Dorsolateral prefrontal cortex (tissue), 120 donors: ENCODE measurements at regions of chr14 and their contacts with region 1.

Region 1: DNA sequence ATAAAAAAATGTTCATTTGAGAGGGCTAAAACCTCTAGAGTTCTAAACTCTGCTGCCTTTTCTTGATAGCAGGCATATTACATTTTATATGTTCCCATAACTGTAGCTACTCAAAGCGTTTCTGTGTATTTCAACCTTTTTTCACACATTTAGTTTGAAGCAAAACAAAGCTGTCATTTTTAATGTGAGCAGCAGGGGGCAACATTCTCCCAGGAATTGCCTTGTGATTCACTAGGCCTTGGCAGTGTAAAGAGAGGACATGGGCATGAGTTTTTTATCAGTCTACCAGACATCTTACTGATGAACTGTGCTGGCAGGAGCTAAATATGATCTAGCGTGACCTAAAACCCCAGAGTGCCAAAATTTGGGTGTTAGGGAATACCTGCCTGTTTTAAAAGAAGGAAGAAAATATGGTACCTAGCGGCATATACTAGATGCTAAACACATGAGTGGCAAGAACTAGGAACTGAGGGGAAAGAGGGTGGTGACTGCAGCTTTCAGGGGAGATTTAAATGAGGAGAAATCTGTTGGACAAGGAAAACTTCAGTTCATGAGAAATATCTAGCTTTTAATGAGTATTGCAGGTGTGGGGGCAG is 65.3 kb downstream of the IFT43 start:
- DNase-seq: peak in 6 of 10 donors; percentile 46 to 82 (median 62)
- H3K4me3 ChIP-seq: no peak overlapping the region
- H3K27ac ChIP-seq: no peak overlapping the region
- H3K27me3 ChIP-seq: no peaks in the 10 kb centered on the region
- CTCF ChIP-seq: peak; percentile 74 to 98 (median 88)

Region 2: DNA sequence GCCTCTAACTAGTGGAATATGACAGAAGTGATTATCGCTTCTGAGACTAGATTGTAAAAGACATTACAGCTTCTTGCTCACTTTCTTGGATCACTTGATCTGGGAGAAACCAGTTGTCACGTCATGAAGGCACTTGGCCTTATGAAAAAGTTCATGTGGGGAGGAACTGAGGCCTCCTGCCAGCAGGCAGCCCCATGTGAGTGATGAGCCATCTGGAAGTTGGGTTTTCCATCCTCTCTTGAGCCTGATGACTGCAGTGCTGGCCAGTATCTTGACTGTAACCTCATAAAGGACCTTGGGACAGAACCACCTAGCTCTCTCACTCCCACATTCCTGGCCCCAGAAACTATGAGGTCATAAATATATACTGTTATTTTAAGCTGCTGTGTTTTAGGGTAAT is 361.9 kb before region 1 on chr14:
- intact Hi-C with region 1: no loop called
- DNase-seq: no peak
- H3K4me3 ChIP-seq: no peak overlapping the region
- H3K27ac ChIP-seq: no peak overlapping the region
- H3K27me3 ChIP-seq: no peaks in the 10 kb centered on the region
- CTCF ChIP-seq: no peak

Region 3: DNA sequence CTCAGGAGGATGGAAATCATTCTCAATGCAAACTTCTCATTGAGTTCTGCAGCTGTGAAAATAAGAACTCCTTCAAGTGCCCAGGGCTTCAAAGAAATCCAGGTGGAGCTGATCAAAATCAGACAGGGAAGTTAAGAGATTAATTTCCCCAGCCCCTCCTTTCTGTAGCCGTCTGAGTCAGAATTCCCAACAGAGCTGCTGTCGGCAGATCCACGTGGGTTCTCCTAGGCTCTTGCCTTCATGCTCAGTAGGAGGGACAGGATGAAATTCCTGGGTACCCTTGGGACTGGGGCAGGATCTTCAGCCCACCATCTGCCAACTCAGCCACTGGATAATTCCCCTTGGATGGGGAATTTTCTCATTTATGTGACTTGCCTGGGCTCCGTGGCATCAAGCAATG is 82.4 kb before region 1 on chr14:
- intact Hi-C with region 1: no loop called
- DNase-seq: no peak
- H3K4me3 ChIP-seq: no peak overlapping the region
- H3K27ac ChIP-seq: peak overlapping the region in 8 of 59 donors; percentile 1 to 51 (median 33)
- H3K27me3 ChIP-seq: no peaks in the 10 kb centered on the region
- CTCF ChIP-seq: no peak

Region 4: GRCh38 chr14:76090616-76091391 is 39.9 kb after region 1 on chr14:
- intact Hi-C with region 1: loop called (anchors 2 to 5 kb)
- DNase-seq: peak in 5 of 10 donors; percentile 27 to 63 (median 52)
- H3K4me3 ChIP-seq: no peak overlapping the region
- H3K27ac ChIP-seq: no peak overlapping the region
- H3K27me3 ChIP-seq: no peaks in the 10 kb centered on the region
- CTCF ChIP-seq: peak in 46 of 56 donors; percentile 15 to 66 (median 45)

Region 5: GRCh38 chr14:76151398-76152339 is 100.8 kb after region 1 on chr14 and contains the start of gene GPATCH2L:
- intact Hi-C with region 1: no loop called
- DNase-seq: peak; percentile 88 to 97 (median 94)
- H3K4me3 ChIP-seq: peak within 1 kb of the TSS; percentile 72 to 100 (median 97)
- H3K27ac ChIP-seq: peak within 1 kb of the TSS in 44 of 59 donors; percentile 16 to 88 (median 68)
- H3K27me3 ChIP-seq: no peaks in the 10 kb centered on the region
- CTCF ChIP-seq: peak in 13 of 56 donors; percentile 13 to 42 (median 16)
- total RNA-seq, gene GPATCH2L: 48.3 to 78.8 (median 63.9) TPM

Region 6: DNA sequence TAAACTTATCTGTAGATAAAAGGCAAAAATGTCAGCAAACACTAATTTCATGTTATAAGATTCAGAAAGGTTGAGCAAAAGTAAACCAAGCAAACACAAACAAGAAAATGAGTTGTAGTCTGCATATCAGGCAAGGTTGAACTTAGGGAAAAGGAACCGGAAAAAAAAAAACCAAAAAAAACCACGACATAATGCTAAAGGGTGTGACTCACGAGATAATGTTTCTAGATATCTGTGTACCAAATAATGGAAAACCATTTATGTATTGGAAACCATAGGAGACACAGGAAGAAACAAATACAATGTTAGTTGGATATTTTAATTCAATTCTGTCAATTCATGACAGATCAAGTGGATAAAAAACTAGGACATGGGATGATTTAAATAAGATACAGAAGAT is 161.3 kb after region 1 on chr14:
- intact Hi-C with region 1: no loop called
- DNase-seq: no peak
- H3K4me3 ChIP-seq: no peak overlapping the region
- H3K27ac ChIP-seq: no peak overlapping the region
- H3K27me3 ChIP-seq: no peaks in the 10 kb centered on the region
- CTCF ChIP-seq: no peak

Region 7: GRCh38 chr14:76352639-76353281 is 301.9 kb after region 1 on chr14:
- intact Hi-C with region 1: loop called (anchors 1 to 2 kb)
- DNase-seq: peak in 6 of 10 donors; percentile 20 to 71 (median 36)
- H3K4me3 ChIP-seq: peak overlapping the region in 55 of 59 donors; percentile 1 to 60 (median 35)
- H3K27ac ChIP-seq: no peak overlapping the region
- H3K27me3 ChIP-seq: peaks cover 0 to 22% (median 0%) of the 10 kb centered on the region in 45 donors
- CTCF ChIP-seq: peak; percentile 49 to 95 (median 86)

Region 8: DNA sequence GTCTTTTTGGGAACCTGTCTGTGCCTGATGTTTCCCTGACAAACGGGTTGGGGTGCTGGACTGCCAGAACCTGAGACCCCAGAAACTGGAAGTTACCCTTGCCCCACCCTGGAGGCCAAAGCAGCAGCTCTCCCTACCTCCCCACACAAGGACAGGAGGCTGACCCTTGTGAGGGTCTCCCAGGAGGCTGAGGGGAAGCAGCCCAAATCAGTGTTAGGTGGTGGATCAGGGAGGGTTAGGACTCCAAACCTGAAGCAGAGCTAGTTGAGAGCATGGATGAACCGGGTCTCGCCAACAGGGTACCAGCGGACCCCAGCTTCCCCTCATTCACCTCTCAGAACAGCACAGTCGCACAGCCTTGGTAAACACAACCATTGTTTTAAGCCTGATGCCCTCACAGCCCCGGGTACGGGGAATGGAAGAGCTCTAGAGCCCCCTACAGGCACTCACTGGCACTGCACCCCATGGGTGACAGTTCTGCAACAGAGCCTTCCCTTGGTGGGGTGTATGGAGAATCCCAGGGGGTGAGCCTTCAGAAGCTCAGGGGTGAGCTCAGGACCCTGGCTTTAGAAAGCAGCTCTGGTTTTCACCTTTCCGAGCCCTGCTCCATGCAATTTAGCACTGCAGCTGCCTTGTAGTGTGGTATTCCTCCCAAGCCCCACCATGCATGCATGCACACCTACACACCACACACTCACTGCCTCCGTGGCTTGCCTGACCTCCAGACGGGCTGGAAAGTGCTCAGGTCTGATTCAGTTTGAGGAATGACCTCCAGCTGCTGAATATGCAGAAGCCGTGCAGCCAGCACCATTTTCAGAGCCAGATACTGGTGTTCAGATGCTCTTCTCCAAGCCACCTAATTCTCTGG is 336.3 kb after region 1 on chr14:
- intact Hi-C with region 1: loop called (anchors 2 to 10 kb)
- DNase-seq: peak; percentile 43 to 84 (median 70)
- H3K4me3 ChIP-seq: no peak overlapping the region
- H3K27ac ChIP-seq: no peak overlapping the region
- H3K27me3 ChIP-seq: peaks cover 0 to 45% (median 8%) of the 10 kb centered on the region in 45 donors
- CTCF ChIP-seq: peak; percentile 55 to 99 (median 94)

Region 9: DNA sequence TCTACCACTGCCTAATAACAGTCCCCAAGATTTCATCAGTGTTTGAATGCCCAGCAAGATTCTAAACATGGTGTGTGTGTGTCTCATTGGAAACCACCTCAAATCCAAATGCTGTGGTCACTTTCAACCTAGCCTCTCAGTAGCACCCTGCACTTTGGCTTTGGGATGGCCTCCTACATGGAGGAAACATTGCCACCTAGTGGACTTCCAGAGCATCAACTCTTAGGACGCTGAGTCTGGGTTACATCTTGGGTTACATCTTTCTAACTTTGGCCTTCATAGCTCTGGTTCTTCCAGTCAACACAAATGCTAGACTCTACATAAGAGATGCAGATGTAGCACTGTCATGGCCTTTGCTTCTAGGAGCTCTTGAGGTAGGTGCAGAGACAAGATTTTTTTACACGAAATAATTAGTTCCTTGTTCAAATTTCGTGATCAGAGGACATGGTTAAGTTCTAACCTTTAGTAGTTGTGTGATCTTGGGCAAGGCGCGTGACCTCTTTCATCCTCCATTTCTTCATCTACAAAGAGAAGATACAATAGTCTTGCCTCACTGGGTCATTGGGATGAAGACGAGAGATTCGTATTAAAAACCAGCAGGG is 596.9 kb after region 1 on chr14:
- intact Hi-C with region 1: loop called in 1 of 2 experiments (anchors 5 kb)
- DNase-seq: peak in 1 of 10 donors; percentile 13
- H3K4me3 ChIP-seq: no peak overlapping the region
- H3K27ac ChIP-seq: no peak overlapping the region
- H3K27me3 ChIP-seq: no peaks in the 10 kb centered on the region
- CTCF ChIP-seq: peak; percentile 55 to 82 (median 74)